PC-3 (cell line): ENCODE measurements at regions of chr4 and their contacts with region 1.

Region 1: GRCh38 chr4:122356317-122356808 is 22.4 kb upstream of the ADAD1 start:
- DNase-seq: peak; percentile 35
- ATAC-seq: peak; percentile 96
- H3K4me3 ChIP-seq: no peak overlapping the region
- H3K27ac ChIP-seq: no peak overlapping the region
- H3K4me1 ChIP-seq: peaks cover 3% of the 10 kb centered on the region; the same call in 1 of the 2 replicates
- H3K27me3 ChIP-seq: no peaks in the 10 kb centered on the region
- CTCF ChIP-seq: no peak

Region 2: DNA sequence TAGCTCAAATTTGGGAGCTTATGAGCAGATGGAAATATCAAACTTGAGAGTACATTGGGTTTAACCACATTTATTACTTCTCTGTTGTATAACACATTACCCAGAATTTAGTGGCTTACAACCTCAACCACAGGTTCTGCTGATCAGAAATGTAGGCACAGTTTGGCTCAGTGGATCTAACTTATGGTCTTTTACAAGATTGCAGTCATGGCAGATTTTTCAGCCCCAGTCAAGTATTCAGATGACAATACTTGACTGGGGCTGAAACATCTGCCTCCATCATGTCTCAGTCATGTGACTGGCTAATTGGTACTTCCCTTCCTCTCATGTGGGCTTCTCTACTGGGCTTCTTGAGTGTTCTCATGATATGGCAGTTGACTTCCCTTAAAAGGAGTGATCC is 21.5 kb before region 1 on chr4:
- CTCF ChIA-PET with region 1: no interaction called
- POLR2A ChIA-PET with region 1: no interaction called
- intact Hi-C with region 1: no loop called
- DNase-seq: no peak
- ATAC-seq: no peak
- H3K4me3 ChIP-seq: no peak overlapping the region
- H3K27ac ChIP-seq: no peak overlapping the region
- H3K4me1 ChIP-seq: no peaks in the 10 kb centered on the region
- H3K27me3 ChIP-seq: no peaks in the 10 kb centered on the region
- CTCF ChIP-seq: no peak

Region 3: GRCh38 chr4:122412547-122412946 is 56.2 kb after region 1 on chr4:
- CTCF ChIA-PET with region 1: no interaction called
- POLR2A ChIA-PET with region 1: no interaction called
- intact Hi-C with region 1: no loop called
- DNase-seq: peak; percentile 21
- ATAC-seq: 0 out of 2 replicates have a peak, but pooled peaks have one; percentile 22
- H3K4me3 ChIP-seq: no peak overlapping the region
- H3K27ac ChIP-seq: no peak overlapping the region
- H3K4me1 ChIP-seq: no peaks in the 10 kb centered on the region
- H3K27me3 ChIP-seq: no peaks in the 10 kb centered on the region
- CTCF ChIP-seq: no peak

Region 4: GRCh38 chr4:122458625-122459024 is 102.3 kb after region 1 on chr4:
- CTCF ChIA-PET with region 1: no interaction called
- POLR2A ChIA-PET with region 1: no interaction called
- intact Hi-C with region 1: loop called (anchors 10 kb)
- DNase-seq: peak; percentile 73
- ATAC-seq: peak; percentile 84
- H3K4me3 ChIP-seq: peak overlapping the region; percentile 67
- H3K27ac ChIP-seq: peak overlapping the region; percentile 56
- H3K4me1 ChIP-seq: peaks cover 24% of the 10 kb centered on the region
- H3K27me3 ChIP-seq: no peaks in the 10 kb centered on the region
- CTCF ChIP-seq: no peak